Mammary epithelial cell (primary cell): ENCODE measurements at regions of chr11 and their contacts with region 1.

Region 1: GRCh38 chr11:84714316-84714780 is 912.8 kb downstream of the DLG2 start:
- DNase-seq: peak; percentile 45
- H3K4me3 ChIP-seq: no peak overlapping the region
- H3K27ac ChIP-seq: no peak overlapping the region
- H3K4me1 ChIP-seq: no peaks in the 10 kb centered on the region
- H3K27me3 ChIP-seq: peaks cover 2% of the 10 kb centered on the region
- CTCF ChIP-seq: peak; percentile 53 to 74

Region 2: GRCh38 chr11:84558085-84558905 is 156.1 kb before region 1 on chr11:
- CTCF ChIA-PET with region 1: no interaction called
- dilution Hi-C with region 1: no loop called
- in situ Hi-C with region 1: no loop called
- intact Hi-C with region 1: loop called (anchors 1 kb)
- DNase-seq: peak; percentile 27
- H3K4me3 ChIP-seq: no peak overlapping the region
- H3K27ac ChIP-seq: no peak overlapping the region
- H3K4me1 ChIP-seq: no peaks in the 10 kb centered on the region
- H3K27me3 ChIP-seq: no peaks in the 10 kb centered on the region
- CTCF ChIP-seq: peak; percentile 80 to 93

Region 3: DNA sequence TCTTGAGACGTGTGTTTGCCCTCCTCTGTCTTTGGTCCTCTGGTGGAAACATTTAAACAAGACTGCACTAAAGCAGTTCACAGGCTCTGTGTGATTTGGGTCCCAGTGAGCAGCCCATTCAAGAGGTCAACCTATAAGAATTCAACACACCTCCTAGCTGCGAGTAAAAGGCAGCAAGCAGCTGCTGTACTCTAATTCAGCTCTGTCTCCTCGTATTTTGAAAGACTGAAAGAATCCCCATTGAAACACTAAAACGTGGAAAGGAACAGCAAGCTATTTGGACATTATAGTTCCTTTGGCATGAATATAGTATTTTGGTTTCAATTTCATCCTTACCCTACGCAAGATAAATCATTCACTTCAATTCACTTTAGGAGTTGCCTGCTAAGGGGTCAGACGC is 133.9 kb before region 1 on chr11:
- CTCF ChIA-PET with region 1: no interaction called
- dilution Hi-C with region 1: no loop called
- in situ Hi-C with region 1: no loop called
- intact Hi-C with region 1: no loop called
- DNase-seq: no peak
- H3K4me3 ChIP-seq: no peak overlapping the region
- H3K27ac ChIP-seq: no peak overlapping the region
- H3K4me1 ChIP-seq: no peaks in the 10 kb centered on the region
- H3K27me3 ChIP-seq: no peaks in the 10 kb centered on the region
- CTCF ChIP-seq: no peak

Region 4: GRCh38 chr11:84642501-84642900 is 71.8 kb before region 1 on chr11:
- CTCF ChIA-PET with region 1: no interaction called
- dilution Hi-C with region 1: no loop called
- in situ Hi-C with region 1: no loop called
- intact Hi-C with region 1: loop called (anchors 2 kb)
- DNase-seq: no peak
- H3K4me3 ChIP-seq: no peak overlapping the region
- H3K27ac ChIP-seq: no peak overlapping the region
- H3K4me1 ChIP-seq: no peaks in the 10 kb centered on the region
- H3K27me3 ChIP-seq: no peaks in the 10 kb centered on the region
- CTCF ChIP-seq: no peak